PC-9 (cell line): ENCODE measurements at regions of chr6 and their contacts with region 1.

Region 1: GRCh38 chr6:27188885-27189418 is 58.5 kb upstream of the PRSS16 start:
- DNase-seq: peak; percentile 55 to 66
- H3K4me3 ChIP-seq: peak overlapping the region; percentile 87
- H3K27ac ChIP-seq: peak overlapping the region; percentile 57; the same call in 1 of the 2 replicates
- H3K4me1 ChIP-seq: peaks cover 12% of the 10 kb centered on the region
- H3K27me3 ChIP-seq: no peaks in the 10 kb centered on the region
- CTCF ChIP-seq: peak; percentile 88

Region 2: DNA sequence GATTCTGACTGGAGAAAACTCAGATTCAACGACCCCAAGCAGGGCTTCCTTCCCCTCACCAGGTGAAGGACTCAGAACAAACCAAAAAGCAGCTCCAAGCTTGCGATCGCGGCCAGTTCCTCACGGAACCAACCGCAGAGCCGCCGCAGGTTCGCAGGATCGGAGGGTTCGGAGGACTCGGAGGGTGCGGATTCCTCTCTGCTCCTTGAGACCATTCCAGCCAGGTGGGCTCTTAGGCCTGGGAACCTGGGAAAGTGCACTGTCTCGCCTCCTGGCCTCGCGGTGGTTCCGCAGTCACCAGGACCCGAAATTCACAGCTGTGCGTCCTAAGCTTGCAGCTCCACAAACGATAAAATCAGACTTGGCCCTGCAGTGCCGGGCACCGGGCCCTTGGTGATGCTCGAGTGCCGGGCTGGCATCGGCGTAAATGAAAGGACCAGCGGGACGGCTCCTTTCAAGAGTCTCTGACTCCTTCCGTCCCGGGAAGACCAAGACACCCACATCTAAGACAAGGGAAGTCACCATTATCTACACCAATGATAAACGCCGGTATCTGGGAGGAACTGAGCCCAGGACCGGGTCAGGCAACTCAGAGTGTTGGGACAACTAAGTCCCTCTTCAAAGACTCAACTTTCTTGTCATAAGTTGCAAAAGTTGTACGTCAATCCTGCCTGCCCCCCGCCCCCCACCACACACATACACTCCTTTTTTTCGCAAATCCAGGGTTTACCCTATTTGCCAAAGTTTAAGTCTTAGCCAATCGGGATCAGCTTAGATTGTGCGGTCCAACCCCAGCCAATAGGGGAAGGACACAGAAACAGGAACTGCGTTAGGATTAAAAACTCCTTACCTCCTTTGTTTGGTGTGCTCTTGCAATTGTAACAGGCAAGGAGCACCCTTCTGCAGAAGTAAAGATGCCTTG is 11.2 kb before region 1 on chr6:
- CTCF ChIA-PET with region 1: interaction called, 16 read pairs
- POLR2A ChIA-PET with region 1: interaction called, 12 read pairs
- intact Hi-C with region 1: no loop called
- DNase-seq: peak; percentile 80 to 88
- H3K4me3 ChIP-seq: peak overlapping the region; percentile 97
- H3K27ac ChIP-seq: peak overlapping the region; percentile 67
- H3K4me1 ChIP-seq: no peaks in the 10 kb centered on the region; the same call in 1 of the 2 replicates
- H3K27me3 ChIP-seq: no peaks in the 10 kb centered on the region
- CTCF ChIP-seq: peak; percentile 67

Region 3: DNA sequence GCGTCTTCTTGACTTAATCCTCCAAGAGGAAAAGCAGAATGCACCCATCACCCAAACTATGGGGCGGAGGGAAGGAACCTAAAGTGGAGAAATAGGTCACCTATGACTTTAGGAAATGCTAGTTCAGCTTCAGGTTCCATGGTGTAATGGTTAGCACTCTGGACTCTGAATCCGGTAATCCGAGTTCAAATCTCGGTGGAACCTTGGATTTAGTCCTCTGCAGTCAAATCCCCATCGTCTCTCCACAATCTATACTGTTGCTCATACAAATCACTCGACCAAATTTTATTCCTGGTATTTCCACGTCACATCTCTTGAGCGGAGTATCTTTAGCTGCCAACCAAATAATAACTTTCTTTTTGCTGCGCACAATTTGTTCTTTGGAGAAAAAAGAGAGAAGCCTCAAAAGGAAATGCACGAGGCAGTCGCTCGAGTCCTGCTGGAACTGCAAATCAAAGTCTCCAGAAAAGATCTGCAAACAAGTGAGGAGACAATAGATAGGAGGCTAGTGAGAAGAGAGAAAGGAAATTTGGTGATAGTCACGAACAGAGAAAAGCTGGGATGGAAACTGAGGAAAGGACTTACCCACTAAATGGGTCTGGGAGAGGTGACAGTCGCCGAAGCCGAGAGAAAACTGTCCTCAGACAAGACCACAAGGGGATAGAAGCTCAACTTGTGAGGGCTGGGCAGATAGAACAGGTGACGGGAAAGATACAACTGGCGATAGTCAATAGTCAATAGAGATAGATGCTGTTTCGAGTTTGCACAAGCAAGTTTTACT is 106.5 kb after region 1 on chr6:
- CTCF ChIA-PET with region 1: no interaction called
- POLR2A ChIA-PET with region 1: no interaction called
- intact Hi-C with region 1: loop called (anchors 10 kb)
- DNase-seq: peak; percentile 49 to 73
- H3K4me3 ChIP-seq: peak overlapping the region; percentile 84
- H3K27ac ChIP-seq: no peak overlapping the region
- H3K4me1 ChIP-seq: peaks cover 27% of the 10 kb centered on the region
- H3K27me3 ChIP-seq: no peaks in the 10 kb centered on the region
- CTCF ChIP-seq: no peak

Region 4: GRCh38 chr6:27312146-27312949 is 123.4 kb after region 1 on chr6 and contains the start of gene POM121L2:
- CTCF ChIA-PET with region 1: no interaction called
- POLR2A ChIA-PET with region 1: no interaction called
- intact Hi-C with region 1: loop called (anchors 1 kb)
- DNase-seq: peak; percentile 64 to 87
- H3K4me3 ChIP-seq: peak within 1 kb of the TSS; percentile 68
- H3K27ac ChIP-seq: no peak within 1 kb of the TSS
- H3K4me1 ChIP-seq: no peaks in the 10 kb centered on the region
- H3K27me3 ChIP-seq: 0 out of 2 replicates have a peak, but pooled peaks cover 3% of the 10 kb centered on the region
- CTCF ChIP-seq: peak; percentile 79
- total RNA-seq, gene POM121L2: 0.26 TPM in 1 of 2 replicates, not detected in the other

Region 5: DNA sequence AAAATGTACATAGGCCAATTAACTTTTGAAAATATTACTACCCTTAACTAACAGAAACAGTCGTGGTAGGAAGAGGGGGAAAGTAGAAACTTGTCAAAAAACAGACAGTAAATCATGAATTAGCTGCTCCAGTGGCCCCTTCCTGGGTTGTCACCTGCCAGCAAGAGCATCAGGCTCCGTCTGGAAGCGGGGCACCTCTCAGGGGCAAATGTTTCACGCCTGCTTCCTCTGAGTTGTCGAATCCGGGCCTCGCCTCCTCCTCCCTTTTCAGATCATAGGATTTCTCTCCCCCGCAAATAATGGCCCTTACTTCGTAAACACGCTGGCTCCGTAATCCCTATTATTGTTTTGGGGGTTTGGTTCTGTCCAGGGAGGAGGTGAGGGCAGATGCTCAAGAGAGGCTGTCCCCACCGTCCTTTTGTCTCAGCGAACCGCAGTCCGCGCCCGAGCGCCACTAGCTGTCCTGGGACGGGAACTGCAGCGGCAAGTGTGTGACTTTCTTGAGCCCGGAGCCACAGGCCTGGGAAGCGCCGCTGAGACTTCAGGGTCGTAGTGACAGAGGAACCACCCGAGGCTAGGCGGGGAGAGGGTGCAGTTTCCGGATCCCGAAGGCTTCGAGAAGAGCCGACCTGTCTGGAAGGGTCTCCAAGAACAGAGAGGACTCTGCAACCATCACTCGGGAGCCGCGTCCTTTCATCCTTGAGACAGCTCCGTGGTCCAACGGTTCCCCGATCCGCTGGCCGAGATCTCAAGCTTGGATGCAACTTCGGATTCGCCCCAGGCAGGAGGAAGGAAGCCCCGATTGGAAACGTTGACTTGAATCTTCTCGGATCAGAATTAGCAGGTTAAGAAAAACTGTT is 498.4 kb after region 1 on chr6:
- CTCF ChIA-PET with region 1: interaction called, 3 read pairs
- POLR2A ChIA-PET with region 1: no interaction called
- intact Hi-C with region 1: loop called (anchors 1 kb)
- DNase-seq: peak; percentile 69 to 87
- H3K4me3 ChIP-seq: peak overlapping the region; percentile 61
- H3K27ac ChIP-seq: peak overlapping the region; percentile 6; the same call in 1 of the 2 replicates
- H3K4me1 ChIP-seq: peaks cover 6% of the 10 kb centered on the region; the same call in 1 of the 2 replicates
- H3K27me3 ChIP-seq: no peaks in the 10 kb centered on the region
- CTCF ChIP-seq: peak; percentile 73; the same call in 1 of the 2 replicates

Region 6: DNA sequence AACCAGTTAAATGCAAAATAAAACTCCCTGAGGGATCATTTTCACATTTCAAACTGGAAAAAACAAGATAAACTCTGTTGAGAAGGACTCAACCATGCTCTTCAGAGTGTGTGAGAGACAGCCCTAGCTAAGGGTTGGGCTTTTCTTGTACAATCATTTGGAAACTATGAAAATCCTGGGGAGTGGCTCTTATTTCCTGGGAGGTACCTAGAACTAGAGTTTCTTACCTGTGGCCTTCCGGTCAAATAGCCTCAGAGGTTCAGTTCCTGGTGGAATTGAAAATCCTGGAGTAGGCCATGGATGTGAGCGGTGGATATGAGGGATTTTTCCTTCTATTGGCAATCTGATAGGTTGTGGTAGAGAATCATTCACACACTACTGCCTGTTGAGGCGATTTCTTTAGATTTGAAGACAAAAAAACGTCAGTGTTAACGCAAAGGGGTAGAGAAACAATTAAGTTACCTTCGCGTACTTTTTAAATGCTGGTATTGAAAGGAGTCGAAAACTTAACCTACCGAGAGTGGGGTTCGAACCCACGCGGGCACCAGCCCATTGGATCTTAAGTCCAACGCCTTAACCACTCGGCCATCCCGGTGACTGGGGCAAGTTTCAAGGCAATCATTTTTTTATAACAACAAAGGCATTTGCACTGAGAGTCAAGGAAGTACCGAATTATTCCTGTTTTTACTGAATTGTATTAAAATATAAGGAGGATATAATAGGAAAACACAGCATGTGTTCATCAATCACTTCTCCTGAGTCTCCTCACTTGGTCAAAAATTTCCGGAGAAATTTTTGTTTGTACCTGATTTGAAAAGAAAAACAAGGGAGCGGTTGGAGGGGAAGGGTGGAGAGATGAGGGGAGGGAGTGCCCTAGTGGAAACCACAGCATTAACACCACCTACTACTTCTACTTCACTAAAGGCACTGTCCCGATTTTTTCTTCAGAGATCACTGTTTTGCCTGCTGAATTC is 531.9 kb after region 1 on chr6:
- CTCF ChIA-PET with region 1: interaction called, 3 read pairs
- POLR2A ChIA-PET with region 1: interaction called, 11 read pairs
- intact Hi-C with region 1: no loop called
- DNase-seq: peak; percentile 57 to 71
- H3K4me3 ChIP-seq: peak overlapping the region; percentile 49
- H3K27ac ChIP-seq: peak overlapping the region; percentile 68
- H3K4me1 ChIP-seq: peaks cover 21% of the 10 kb centered on the region
- H3K27me3 ChIP-seq: no peaks in the 10 kb centered on the region
- CTCF ChIP-seq: peak; percentile 23; the same call in 1 of the 2 replicates

Region 7: DNA sequence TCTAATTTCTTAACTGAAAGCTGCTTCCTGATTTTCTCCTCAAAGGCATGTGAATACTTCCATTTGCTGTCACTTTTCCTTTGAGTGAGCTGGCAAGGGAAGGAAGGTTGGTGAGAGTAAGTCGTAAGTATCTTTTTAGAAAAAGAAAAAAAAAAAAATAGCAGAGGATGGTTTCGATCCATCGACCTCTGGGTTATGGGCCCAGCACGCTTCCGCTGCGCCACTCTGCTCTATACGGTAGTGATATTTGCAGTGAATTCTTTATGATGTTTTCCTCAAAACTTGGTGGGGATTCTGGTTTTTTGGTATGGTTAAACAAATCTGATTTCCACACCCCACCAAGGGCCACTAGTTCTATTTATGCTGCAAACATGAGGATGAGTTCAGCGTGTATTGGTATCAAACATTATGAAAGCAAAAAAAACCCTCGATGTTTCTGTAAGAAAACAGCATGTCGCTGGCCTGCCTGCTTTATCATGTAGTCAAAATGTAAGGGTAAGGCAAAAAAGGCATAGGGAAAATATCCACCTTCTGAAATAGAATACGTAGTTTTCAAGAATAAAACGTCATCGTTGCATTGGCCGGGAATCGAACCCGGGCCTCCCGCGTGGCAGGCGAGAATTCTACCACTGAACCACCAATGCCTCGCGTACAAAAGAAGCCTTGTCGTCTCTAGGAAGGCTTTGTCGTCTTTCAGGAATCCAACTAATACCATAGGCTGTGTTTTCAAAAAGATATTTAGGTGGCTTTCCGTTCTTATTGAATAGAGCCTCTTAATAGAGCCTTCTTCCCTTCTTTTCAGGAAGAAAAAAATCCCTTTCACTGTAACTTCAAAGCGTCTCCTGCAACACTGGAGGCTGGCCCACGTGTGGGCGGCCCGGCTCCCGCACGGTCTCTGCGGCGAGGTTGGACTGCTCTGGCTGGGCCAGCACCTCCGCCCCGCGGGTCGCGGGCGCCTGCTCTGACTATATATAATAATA is 713.7 kb after region 1 on chr6:
- CTCF ChIA-PET with region 1: no interaction called
- POLR2A ChIA-PET with region 1: no interaction called
- intact Hi-C with region 1: no loop called
- DNase-seq: peak; percentile 76 to 86
- H3K4me3 ChIP-seq: peak overlapping the region; percentile 73
- H3K27ac ChIP-seq: peak overlapping the region; percentile 74
- H3K4me1 ChIP-seq: peaks cover 9% of the 10 kb centered on the region
- H3K27me3 ChIP-seq: no peaks in the 10 kb centered on the region
- CTCF ChIP-seq: no peak